Panc1 (cell line): ENCODE measurements at regions of chr6 and their contacts with region 1.

Region 1: GRCh38 chr6:25788305-25788922 is 33.9 kb downstream of the SLC17A4 start:
- DNase-seq: peak; percentile 28
- ATAC-seq: peak; percentile 79
- H3K4me3 ChIP-seq: no peak overlapping the region
- H3K27ac ChIP-seq: no peak overlapping the region
- H3K4me1 ChIP-seq: no peaks in the 10 kb centered on the region
- H3K27me3 ChIP-seq: no peaks in the 10 kb centered on the region
- CTCF ChIP-seq: peak; percentile 69

Region 2: DNA sequence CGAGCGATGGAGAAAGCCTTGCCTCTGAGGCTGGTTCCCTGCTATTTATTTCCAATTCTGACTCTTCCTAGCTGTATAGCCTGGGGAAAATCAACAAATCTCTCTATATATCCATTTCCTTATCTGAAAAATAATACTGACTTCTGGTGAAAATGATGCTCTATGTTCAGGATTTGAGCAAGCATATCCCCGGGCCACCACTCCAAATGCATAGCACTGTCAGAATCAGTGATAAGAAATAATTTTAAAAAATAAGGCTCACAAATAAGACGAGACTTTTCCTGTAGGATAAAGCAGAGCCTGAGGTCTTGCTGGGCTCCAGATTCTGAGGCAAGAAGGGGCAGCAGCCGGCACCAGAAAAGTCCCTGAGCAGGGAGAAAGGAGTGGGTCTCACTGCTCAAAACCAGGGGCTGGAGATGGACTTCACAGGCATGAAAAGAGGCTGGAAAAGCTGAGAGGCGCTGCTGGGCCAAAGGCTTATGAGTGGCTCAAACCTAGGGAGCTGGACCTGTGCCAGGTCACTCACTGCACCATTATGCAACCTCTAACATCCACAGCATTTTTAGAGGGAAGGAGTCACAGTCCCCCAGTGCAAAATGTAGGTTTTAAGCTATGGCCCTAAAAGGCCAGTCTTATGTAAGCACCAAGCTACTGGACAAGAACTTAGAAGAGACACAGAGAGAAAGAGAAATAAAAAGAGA is 82.0 kb before region 1 on chr6:
- CTCF ChIA-PET with region 1: no interaction called
- POLR2A ChIA-PET with region 1: no interaction called
- in situ Hi-C with region 1: loop called (anchors 10 kb)
- intact Hi-C with region 1: no loop called
- DNase-seq: no peak
- ATAC-seq: no peak
- H3K4me3 ChIP-seq: no peak overlapping the region
- H3K27ac ChIP-seq: no peak overlapping the region
- H3K4me1 ChIP-seq: no peaks in the 10 kb centered on the region
- H3K27me3 ChIP-seq: no peaks in the 10 kb centered on the region
- CTCF ChIP-seq: no peak

Region 3: DNA sequence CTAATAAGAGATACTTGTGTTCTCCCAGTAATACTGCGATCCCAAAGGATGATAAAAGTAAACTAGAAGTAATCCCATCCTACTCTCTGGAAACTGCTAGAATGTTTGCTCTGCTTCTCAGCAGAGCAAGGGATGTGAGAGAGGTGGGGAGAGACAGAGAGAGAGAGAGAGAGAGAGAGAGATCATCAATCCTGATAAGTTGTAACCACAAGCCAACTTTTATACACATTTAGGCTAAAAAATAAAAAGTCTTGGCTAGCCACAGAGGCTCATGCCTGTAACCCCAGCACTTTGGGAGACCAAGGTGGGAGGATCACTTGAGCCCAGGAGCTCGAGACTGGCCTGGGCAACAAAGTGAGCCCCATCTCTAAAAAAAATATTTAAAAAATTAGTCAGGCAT is 158.2 kb after region 1 on chr6:
- CTCF ChIA-PET with region 1: no interaction called
- POLR2A ChIA-PET with region 1: no interaction called
- in situ Hi-C with region 1: no loop called
- intact Hi-C with region 1: loop called (anchors 2 kb)
- DNase-seq: no peak
- ATAC-seq: no peak
- H3K4me3 ChIP-seq: no peak overlapping the region
- H3K27ac ChIP-seq: no peak overlapping the region
- H3K4me1 ChIP-seq: no peaks in the 10 kb centered on the region
- H3K27me3 ChIP-seq: peaks cover 3% of the 10 kb centered on the region; the same call in 1 of the 2 replicates
- CTCF ChIP-seq: no peak